ENCODE measurements at regions of chr5 and their contacts with region 1.

Region 1: GRCh38 chr5:9207817-9208418 is 338.0 kb downstream of the SEMA5A start:
- DNase-seq: no peak
- ATAC-seq: peak; percentile 90
- H3K4me3 ChIP-seq: no peak overlapping the region
- H3K27ac ChIP-seq: no peak overlapping the region
- H3K4me1 ChIP-seq: no peaks in the 10 kb centered on the region
- H3K27me3 ChIP-seq: no peaks in the 10 kb centered on the region; a peak in 1 of 4 replicates
- CTCF ChIP-seq: peak; percentile 8 to 67 (median 28); a peak in 4 of 6 replicates
- EP300 ChIP-seq: no peak
- POLR2A ChIP-seq: no peak
- RAD21 ChIP-seq: peak; percentile 71

Region 2: DNA sequence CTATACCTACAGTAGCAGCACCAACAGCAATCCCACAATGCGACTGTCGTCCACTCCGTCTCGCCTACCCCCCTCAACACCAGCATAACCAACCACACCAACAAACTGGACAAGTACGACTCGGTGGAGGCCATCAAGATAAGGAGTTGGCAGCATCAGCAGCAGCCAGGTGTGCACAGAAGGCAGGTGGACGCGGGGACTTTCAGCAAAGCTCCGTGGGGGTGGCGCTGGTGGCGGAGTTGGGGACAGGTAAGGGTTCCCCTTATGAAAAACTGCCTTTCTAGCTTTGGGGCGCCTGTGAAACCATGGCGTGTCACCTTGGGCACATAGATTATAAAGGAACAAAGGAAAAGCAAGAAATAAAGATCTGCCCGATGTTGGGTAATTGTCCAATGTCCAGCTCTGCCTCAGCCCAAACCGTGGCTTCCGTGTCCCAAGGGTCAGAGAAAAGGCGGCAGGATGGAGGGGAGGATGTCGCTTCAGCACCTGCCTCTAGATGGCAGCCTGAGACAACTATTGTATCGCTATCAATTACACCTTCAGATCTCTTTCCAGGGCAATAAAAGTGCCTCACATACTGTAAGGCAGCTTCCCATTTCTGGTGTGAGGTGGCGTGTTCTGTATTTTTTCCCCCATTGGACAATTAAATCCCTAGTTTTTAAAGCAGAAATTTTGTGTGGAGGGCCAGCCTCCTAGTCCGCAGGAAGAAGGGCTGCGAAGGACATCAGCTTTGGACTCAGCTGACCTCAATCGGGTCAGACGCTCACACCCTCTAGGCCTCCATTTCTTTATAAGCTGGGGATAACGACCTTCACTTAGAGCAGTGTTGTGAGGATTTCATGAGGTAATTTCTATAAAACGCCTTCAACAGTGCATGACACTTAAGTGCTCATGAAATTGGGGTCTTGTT is 1280.2 kb before region 1 on chr5:
- CTCF ChIA-PET with region 1: interaction called, 18 read pairs
- POLR2A ChIA-PET with region 1: no interaction called
- RAD21 ChIA-PET with region 1: interaction called, 6 read pairs
- SMC1A ChIA-PET with region 1: no interaction called
- in situ Hi-C with region 1: loop called (anchors 5 kb)
- intact Hi-C with region 1: loop called (anchors 2 kb)
- DNase-seq: no peak
- ATAC-seq: peak; percentile 96
- H3K4me3 ChIP-seq: no peak overlapping the region
- H3K27ac ChIP-seq: no peak overlapping the region
- H3K4me1 ChIP-seq: no peaks in the 10 kb centered on the region
- H3K27me3 ChIP-seq: no peaks in the 10 kb centered on the region; a peak in 1 of 4 replicates
- CTCF ChIP-seq: peak; percentile 74 to 81 (median 77); a peak in 5 of 6 replicates
- EP300 ChIP-seq: no peak
- POLR2A ChIP-seq: no peak
- RAD21 ChIP-seq: peak; percentile 83

Region 3: DNA sequence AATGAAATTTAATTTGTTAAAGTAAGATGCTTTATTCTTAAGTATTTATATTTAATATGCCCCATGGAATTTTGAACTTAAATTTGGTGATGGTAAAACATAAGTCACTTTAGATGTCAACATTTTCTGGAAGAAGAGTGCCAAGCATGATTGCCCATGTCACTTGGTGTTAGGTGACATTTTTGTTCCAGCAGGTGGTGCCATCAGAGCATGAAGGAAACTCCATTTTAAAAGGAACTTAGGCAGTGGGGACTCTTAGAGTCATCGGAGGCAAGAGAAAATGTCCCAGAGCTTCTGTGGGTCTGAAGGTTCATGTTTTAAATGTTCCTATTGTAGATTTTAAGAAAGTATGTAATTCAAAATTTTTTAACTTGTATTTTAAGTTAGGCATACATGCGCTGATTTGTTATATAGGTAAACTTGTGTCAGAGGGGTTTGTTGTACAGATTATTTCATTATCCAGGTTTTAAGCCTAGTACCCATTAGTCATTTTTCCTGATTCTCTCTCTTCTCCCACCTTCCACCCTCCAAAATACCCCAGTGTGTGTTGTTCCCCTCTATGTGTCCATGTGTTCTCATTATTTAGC is 451.3 kb before region 1 on chr5:
- CTCF ChIA-PET with region 1: interaction called, 13 read pairs
- POLR2A ChIA-PET with region 1: no interaction called
- RAD21 ChIA-PET with region 1: interaction called, 3 read pairs
- SMC1A ChIA-PET with region 1: interaction called, 4 read pairs
- in situ Hi-C with region 1: loop called (anchors 10 kb)
- intact Hi-C with region 1: loop called (anchors 1 kb)
- DNase-seq: no peak
- ATAC-seq: no peak
- H3K4me3 ChIP-seq: no peak overlapping the region
- H3K27ac ChIP-seq: no peak overlapping the region
- H3K4me1 ChIP-seq: no peaks in the 10 kb centered on the region
- H3K27me3 ChIP-seq: no peaks in the 10 kb centered on the region
- CTCF ChIP-seq: peak; percentile 11 to 36 (median 19); a peak in 3 of 6 replicates
- EP300 ChIP-seq: no peak
- POLR2A ChIP-seq: no peak
- RAD21 ChIP-seq: peak; percentile 57

Region 4: GRCh38 chr5:8884029-8884428 is 323.9 kb before region 1 on chr5:
- CTCF ChIA-PET with region 1: interaction called, 10 read pairs
- POLR2A ChIA-PET with region 1: no interaction called
- RAD21 ChIA-PET with region 1: interaction called, 3 read pairs
- SMC1A ChIA-PET with region 1: interaction called, 6 read pairs
- in situ Hi-C with region 1: no loop called
- intact Hi-C with region 1: no loop called
- DNase-seq: no peak
- ATAC-seq: no peak
- H3K4me3 ChIP-seq: no peak overlapping the region
- H3K27ac ChIP-seq: no peak overlapping the region
- H3K4me1 ChIP-seq: no peaks in the 10 kb centered on the region
- H3K27me3 ChIP-seq: no peaks in the 10 kb centered on the region
- CTCF ChIP-seq: no peak
- EP300 ChIP-seq: no peak
- POLR2A ChIP-seq: no peak
- RAD21 ChIP-seq: no peak

Region 5: DNA sequence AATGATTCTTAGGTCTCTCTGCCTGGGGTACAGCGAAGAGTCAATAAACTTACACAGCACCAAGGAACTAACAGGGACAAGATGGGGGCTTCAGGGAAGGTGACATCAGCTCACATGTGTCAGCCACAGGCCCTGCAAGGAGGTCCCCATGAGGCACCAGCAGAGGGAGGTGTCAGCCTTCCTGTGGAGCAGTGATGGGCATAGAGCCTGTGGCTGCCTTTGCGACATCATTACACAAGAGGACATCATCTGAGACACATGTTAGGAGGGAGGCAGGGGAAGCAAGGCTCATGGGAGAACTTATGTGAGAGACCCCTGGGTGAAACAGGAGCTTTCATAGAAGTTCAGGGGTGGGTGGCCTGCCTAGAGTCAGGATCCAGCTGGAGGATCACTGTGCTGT is 51.6 kb before region 1 on chr5:
- CTCF ChIA-PET with region 1: interaction called, 25 read pairs
- POLR2A ChIA-PET with region 1: no interaction called
- RAD21 ChIA-PET with region 1: interaction called, 3 read pairs
- SMC1A ChIA-PET with region 1: interaction called, 6 read pairs
- in situ Hi-C with region 1: no loop called
- intact Hi-C with region 1: loop called (anchors 2 kb)
- DNase-seq: no peak
- ATAC-seq: peak; percentile 86
- H3K4me3 ChIP-seq: no peak overlapping the region
- H3K27ac ChIP-seq: no peak overlapping the region
- H3K4me1 ChIP-seq: no peaks in the 10 kb centered on the region
- H3K27me3 ChIP-seq: no peaks in the 10 kb centered on the region
- CTCF ChIP-seq: peak in 2 of 3 experiments; percentile 19 to 42; a peak in 3 of 6 replicates
- EP300 ChIP-seq: no peak
- POLR2A ChIP-seq: no peak
- RAD21 ChIP-seq: peak; percentile 66

Region 6: GRCh38 chr5:9223863-9224262 is 15.9 kb after region 1 on chr5:
- CTCF ChIA-PET with region 1: no interaction called
- POLR2A ChIA-PET with region 1: no interaction called
- RAD21 ChIA-PET with region 1: no interaction called
- SMC1A ChIA-PET with region 1: no interaction called
- in situ Hi-C with region 1: no loop called
- intact Hi-C with region 1: no loop called
- DNase-seq: no peak
- ATAC-seq: no peak
- H3K4me3 ChIP-seq: no peak overlapping the region
- H3K27ac ChIP-seq: no peak overlapping the region
- H3K4me1 ChIP-seq: no peaks in the 10 kb centered on the region
- H3K27me3 ChIP-seq: no peaks in the 10 kb centered on the region
- CTCF ChIP-seq: no peak
- EP300 ChIP-seq: no peak
- POLR2A ChIP-seq: no peak
- RAD21 ChIP-seq: no peak

Region 7: DNA sequence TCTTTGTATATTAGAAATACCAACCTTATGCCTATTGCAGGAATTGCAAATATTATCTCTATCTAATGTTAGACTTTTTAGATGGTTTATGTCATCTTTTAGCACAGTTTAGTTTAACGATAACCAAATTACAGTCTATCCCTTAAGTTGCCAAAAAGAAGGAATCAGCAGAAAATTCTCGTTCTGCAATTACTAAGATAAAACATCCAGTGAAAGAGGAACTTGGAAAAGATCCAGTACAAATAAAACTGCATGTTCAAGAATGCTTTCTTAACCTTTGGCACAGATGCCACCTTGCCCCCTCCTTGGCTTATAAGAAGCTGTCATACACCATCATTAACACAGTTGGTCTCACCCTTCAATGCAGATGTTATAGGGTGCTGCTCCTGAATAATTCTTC is 214.0 kb after region 1 on chr5:
- CTCF ChIA-PET with region 1: no interaction called
- POLR2A ChIA-PET with region 1: no interaction called
- RAD21 ChIA-PET with region 1: no interaction called
- SMC1A ChIA-PET with region 1: no interaction called
- in situ Hi-C with region 1: no loop called
- intact Hi-C with region 1: no loop called
- DNase-seq: no peak
- ATAC-seq: no peak
- H3K4me3 ChIP-seq: no peak overlapping the region
- H3K27ac ChIP-seq: no peak overlapping the region
- H3K4me1 ChIP-seq: no peaks in the 10 kb centered on the region
- H3K27me3 ChIP-seq: no peaks in the 10 kb centered on the region
- CTCF ChIP-seq: no peak
- EP300 ChIP-seq: no peak
- POLR2A ChIP-seq: no peak
- RAD21 ChIP-seq: no peak

Region 8: GRCh38 chr5:9544502-9545135 is 336.7 kb after region 1 on chr5:
- CTCF ChIA-PET with region 1: interaction called, 3 read pairs
- POLR2A ChIA-PET with region 1: no interaction called
- RAD21 ChIA-PET with region 1: no interaction called
- SMC1A ChIA-PET with region 1: interaction called, 3 read pairs
- in situ Hi-C with region 1: no loop called
- intact Hi-C with region 1: loop called (anchors 10 kb)
- DNase-seq: no peak
- ATAC-seq: peak; percentile 97
- H3K4me3 ChIP-seq: peak overlapping the region; percentile 46
- H3K27ac ChIP-seq: no peak overlapping the region
- H3K4me1 ChIP-seq: peaks cover 3% of the 10 kb centered on the region; the same call in 1 of the 2 replicates
- H3K27me3 ChIP-seq: peaks cover 1 to 9% of the 10 kb centered on the region in 2 experiments
- CTCF ChIP-seq: peak; percentile 77 to 89 (median 78)
- EP300 ChIP-seq: no peak
- POLR2A ChIP-seq: no peak
- RAD21 ChIP-seq: peak; percentile 90